T-cell (primary cell): ENCODE measurements at regions of chr9 and their contacts with region 1.

Region 1: DNA sequence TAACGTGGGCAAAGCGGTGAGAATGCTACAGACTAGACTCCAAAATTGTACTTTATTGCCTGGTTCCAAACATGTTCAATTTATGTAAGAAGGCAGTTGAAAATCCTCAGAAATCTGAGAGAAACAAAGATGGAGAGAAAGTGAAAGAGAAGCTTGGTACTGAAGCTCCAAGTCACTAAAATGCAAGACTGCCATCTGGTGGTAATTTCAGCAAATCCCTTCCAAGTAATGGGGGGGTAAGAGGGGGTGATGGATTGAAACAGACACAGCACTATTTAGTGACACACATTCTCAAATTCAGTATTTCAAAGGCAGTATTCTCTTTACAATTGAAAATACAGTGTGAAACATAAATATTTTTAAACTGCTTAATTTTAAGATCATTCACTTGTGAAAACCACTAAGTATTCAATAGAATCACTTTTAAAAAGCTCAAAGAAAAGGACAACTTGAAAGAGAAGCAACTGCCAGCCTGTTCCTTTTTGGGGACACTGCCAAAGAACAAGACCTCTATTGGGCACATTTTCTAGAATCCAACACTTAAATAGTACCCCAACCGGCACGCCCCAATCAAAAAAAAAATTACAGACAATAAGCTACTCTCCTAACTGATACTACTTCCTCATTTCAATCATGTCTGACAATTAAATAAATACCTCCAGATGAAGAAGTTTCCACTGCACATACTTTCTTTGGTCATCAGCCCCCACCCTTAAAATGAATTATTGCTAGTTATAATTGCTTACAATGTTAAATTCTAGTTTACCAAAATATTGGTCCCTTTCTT is 131.5 kb downstream of the AGTPBP1 start:
- DNase-seq: peak in 24 of 35 experiments; percentile 10 to 85 (median 26)
- ATAC-seq: peak; percentile 75 to 92 (median 86)
- H3K4me3 ChIP-seq: no peak overlapping the region
- H3K4me3 Mint-ChIP-seq: peak overlapping the region in 1 of 3 donors; percentile 38
- H3K27ac ChIP-seq: no peak overlapping the region
- H3K27ac Mint-ChIP-seq: peak overlapping the region in 1 of 2 donors; percentile 77
- H3K4me1 ChIP-seq: peaks cover 0 to 3% of the 10 kb centered on the region in 2 experiments
- H3K4me1 Mint-ChIP-seq: peaks cover 12 to 14% (median 13%) of the 10 kb centered on the region in 3 donors
- H3K27me3 ChIP-seq: no peaks in the 10 kb centered on the region
- H3K27me3 Mint-ChIP-seq: no peaks in the 10 kb centered on the region

Region 2: DNA sequence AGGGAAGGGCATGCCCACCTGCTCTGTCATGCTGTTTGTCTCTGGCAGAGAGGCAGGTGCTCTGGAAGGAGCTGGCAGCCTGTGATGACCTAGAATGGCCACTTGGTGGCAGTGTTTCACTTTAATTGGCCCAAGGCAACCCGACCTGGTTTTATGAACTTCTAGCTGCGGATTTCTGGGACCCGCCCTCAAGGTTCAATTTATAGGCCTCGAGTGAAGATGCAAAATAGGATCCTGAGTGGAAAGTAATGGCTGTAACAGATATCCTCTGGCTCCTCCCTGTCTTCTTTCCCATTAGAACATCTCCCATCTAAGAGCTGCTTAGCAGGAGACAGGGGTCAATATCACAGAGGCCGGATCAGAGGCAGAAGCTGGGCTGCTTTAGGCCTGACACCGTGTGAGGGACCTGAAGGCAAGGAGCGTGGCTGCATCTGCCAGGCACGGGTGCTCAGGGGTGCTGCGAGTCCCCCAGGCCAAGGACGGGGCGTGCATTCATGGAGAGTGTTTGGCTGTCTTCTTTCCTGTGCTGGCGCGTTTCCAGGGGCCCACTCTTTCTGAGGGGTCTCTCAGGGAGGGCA is 1213.0 kb before region 1 on chr9:
- CTCF ChIA-PET with region 1: interaction called, 12 to 49 read pairs
- POLR2A ChIA-PET with region 1: no interaction called
- DNase-seq: peak in 34 of 35 experiments; percentile 6 to 74 (median 49)
- ATAC-seq: peak; percentile 60 to 68 (median 66)
- H3K4me3 ChIP-seq: no peak overlapping the region
- H3K4me3 Mint-ChIP-seq: no peak overlapping the region
- H3K27ac ChIP-seq: no peak overlapping the region
- H3K27ac Mint-ChIP-seq: no peak overlapping the region
- H3K4me1 ChIP-seq: no peaks in the 10 kb centered on the region
- H3K4me1 Mint-ChIP-seq: no peaks in the 10 kb centered on the region
- H3K27me3 ChIP-seq: peaks cover 0 to 3% of the 10 kb centered on the region in 2 experiments
- H3K27me3 Mint-ChIP-seq: peaks cover 0 to 7% of the 10 kb centered on the region in 2 donors